Dendritic cell treated with granulocyte-macrophage colony-stimulating factor and Interleukin-4, amounts not matched to agents 40 ng/mL and 50 ng/mL, for 4 days (primary cell): ENCODE measurements at regions of chr9 and their contacts with region 1.

Region 1: DNA sequence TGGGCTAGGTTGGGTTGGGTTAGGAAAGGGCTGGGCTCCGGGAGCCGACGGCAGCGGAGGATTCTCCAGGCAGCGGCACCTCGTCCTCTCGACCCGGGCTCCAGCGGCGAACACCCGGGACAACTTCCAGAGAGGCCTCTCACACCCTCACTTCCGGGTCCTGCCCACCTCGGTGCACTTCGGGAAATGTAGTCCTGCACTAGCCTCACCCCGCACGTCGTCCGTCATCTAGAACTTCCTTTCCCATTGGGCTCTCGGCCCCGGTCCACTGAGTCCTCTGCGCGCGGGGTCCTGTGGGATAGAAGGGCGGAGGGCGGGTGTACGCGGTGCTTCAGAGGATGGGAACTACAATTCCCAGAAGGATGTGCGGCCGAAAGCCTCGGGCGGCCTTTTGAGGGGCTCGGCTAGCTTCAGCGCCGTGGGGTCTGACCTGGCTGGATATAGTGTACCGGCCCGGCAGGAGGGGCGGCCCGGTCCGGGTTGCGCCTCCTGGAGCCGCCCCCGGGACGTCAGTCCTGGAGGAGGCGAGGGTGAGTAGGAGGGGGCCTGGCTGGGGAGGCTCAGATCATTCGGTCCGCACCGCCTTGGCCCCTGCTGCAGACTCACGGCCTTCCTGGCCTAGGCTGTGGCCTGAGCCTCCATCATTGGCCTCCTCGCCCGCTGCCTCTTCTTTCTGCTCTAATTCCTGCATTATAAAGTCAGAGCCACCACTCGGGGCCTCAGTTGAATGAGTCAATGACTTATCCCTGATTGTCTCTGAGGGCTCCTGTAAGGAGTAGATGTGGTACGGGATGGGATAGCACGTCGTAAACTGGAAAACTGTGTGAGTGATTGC is at the starts of genes ERP44 and INVS:
- H3K4me3 Mint-ChIP-seq: peak within 1 kb of the TSS; percentile 100
- H3K27ac Mint-ChIP-seq: peak within 1 kb of the TSS; percentile 100
- H3K4me1 Mint-ChIP-seq: peaks cover 19% of the 10 kb centered on the region
- H3K27me3 Mint-ChIP-seq: no peaks in the 10 kb centered on the region

Region 2: DNA sequence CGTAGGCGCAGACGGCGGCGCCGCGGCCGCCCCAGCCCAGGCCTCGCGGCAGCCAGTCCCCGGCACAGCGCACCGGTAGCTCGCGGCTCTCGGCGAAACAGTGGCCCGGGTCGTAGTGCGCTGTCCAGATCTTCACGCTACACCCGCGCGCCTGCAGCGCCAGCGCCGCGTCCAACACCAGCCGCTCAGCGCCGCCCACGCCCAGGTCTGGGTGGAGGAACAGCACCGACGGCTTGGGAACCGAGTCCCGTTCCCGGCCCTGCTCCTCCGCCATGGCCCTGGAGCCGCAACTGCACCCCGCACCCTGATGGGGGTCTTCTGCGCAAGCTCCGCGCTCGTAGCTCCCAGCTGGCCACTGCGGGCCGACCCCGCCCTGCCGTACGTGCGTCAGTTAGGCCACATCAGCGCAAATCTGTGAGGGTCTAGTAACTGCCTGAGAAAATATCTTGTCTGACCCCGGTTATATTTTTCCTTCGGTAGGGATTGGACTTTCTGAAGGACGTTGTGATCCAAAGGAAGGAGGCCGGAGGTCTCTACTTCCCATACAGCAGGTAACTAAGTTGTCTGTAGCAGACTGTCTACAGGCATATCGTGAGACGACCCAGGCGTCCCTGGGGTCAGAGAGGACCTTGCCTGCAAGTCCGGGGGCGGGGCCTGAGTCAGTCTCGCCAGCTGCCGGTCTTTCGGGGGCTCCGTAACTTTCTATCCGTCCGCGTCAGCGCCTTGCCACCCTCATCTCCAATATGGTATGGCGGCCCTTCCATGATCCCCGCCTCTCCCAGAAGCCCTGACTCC is 877.3 kb before region 1 on chr9 and contains the starts of genes ALG2 and SEC61B:
- intact Hi-C with region 1: loop called (anchors 5 kb)
- H3K4me3 Mint-ChIP-seq: peak within 1 kb of the TSS; percentile 92
- H3K27ac Mint-ChIP-seq: peak within 1 kb of the TSS; percentile 99
- H3K4me1 Mint-ChIP-seq: peaks cover 70% of the 10 kb centered on the region
- H3K27me3 Mint-ChIP-seq: no peaks in the 10 kb centered on the region

Region 3: DNA sequence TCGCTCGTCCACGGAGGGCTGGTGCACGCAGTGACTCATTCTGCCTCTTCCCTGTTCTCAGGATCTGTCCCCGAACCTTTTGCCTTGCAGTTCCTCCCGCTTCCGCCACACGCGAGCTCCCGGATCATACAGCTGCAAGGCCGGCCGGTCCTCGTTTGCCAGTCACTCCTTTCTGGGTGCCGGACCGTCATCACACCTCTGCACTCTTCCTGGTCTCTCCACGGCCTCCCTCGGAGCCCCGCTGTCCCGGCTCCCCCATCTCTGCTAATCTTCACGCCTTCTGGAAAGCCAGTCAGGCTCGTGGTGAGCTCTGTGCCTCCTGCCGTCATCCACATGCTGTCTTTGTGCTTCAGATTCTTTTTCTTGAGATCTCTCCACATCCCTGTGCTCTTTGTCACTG is 100.8 kb before region 1 on chr9:
- intact Hi-C with region 1: no loop called
- H3K4me3 Mint-ChIP-seq: no peak overlapping the region
- H3K27ac Mint-ChIP-seq: no peak overlapping the region
- H3K4me1 Mint-ChIP-seq: no peaks in the 10 kb centered on the region
- H3K27me3 Mint-ChIP-seq: no peaks in the 10 kb centered on the region